IMR-90 (cell line): ENCODE measurements at regions of chr9 and their contacts with region 1.

Region 1: GRCh38 chr9:38277601-38278200 is 114.8 kb upstream of the ALDH1B1 start:
- DNase-seq: no peak
- ATAC-seq: no peak
- H3K4me3 ChIP-seq: no peak overlapping the region
- H3K27ac ChIP-seq: no peak overlapping the region
- H3K4me1 ChIP-seq: no peaks in the 10 kb centered on the region
- H3K27me3 ChIP-seq: peaks cover 46% of the 10 kb centered on the region
- CTCF ChIP-seq: no peak
- POLR2A ChIP-seq: no peak
- RAD21 ChIP-seq: no peak

Region 2: DNA sequence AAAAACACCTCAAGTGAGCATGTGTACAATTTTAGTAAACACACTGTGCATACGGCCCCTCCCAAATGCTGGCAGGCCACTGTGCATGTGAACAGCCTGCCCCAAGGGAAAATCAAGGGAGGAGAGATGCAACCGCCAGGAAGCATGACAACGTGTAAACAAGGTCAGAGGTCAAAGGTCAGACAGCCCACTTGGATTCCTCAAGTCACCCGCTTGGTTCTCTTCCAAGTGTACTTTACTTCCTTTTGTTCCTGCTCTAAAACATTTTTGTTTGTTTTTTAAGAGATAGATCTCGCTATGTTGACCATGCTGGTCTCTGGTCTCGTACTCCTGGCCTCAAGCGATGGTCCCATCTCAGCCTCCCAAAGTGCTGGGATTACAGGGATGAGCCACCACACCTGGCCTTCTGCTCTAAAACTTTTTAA is 82.0 kb before region 1 on chr9:
- CTCF ChIA-PET with region 1: no interaction called
- POLR2A ChIA-PET with region 1: no interaction called
- dilution Hi-C with region 1: no loop called
- in situ Hi-C with region 1: no loop called
- intact Hi-C with region 1: no loop called
- DNase-seq: no peak
- ATAC-seq: no peak
- H3K4me3 ChIP-seq: no peak overlapping the region
- H3K27ac ChIP-seq: no peak overlapping the region
- H3K4me1 ChIP-seq: no peaks in the 10 kb centered on the region
- H3K27me3 ChIP-seq: peaks cover 38% of the 10 kb centered on the region
- CTCF ChIP-seq: no peak
- POLR2A ChIP-seq: no peak
- RAD21 ChIP-seq: no peak

Region 3: DNA sequence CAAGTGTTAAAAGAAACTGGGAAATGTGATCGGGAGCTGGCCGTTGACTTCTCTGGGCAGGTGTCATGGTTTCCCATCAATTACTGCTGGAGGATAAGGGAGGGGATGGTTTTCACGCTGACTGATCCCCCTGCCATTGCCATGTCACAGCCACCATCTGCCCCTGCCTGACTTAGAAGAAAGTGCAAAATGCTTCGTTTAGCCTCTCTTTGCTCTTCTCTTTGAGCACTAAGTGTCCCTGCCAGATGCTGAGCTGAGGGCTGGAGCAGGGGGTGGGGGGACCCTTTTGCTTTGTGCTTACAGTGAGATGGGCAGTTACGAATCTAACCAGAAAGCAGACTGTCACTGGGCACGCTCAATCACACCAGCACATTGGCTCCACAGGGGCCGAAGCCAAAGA is 23.6 kb before region 1 on chr9:
- CTCF ChIA-PET with region 1: no interaction called
- POLR2A ChIA-PET with region 1: no interaction called
- dilution Hi-C with region 1: no loop called
- in situ Hi-C with region 1: no loop called
- intact Hi-C with region 1: loop called (anchors 2 kb)
- DNase-seq: no peak
- ATAC-seq: no peak
- H3K4me3 ChIP-seq: no peak overlapping the region
- H3K27ac ChIP-seq: no peak overlapping the region
- H3K4me1 ChIP-seq: no peaks in the 10 kb centered on the region
- H3K27me3 ChIP-seq: peaks cover 36% of the 10 kb centered on the region
- CTCF ChIP-seq: no peak
- POLR2A ChIP-seq: no peak
- RAD21 ChIP-seq: no peak

Region 4: DNA sequence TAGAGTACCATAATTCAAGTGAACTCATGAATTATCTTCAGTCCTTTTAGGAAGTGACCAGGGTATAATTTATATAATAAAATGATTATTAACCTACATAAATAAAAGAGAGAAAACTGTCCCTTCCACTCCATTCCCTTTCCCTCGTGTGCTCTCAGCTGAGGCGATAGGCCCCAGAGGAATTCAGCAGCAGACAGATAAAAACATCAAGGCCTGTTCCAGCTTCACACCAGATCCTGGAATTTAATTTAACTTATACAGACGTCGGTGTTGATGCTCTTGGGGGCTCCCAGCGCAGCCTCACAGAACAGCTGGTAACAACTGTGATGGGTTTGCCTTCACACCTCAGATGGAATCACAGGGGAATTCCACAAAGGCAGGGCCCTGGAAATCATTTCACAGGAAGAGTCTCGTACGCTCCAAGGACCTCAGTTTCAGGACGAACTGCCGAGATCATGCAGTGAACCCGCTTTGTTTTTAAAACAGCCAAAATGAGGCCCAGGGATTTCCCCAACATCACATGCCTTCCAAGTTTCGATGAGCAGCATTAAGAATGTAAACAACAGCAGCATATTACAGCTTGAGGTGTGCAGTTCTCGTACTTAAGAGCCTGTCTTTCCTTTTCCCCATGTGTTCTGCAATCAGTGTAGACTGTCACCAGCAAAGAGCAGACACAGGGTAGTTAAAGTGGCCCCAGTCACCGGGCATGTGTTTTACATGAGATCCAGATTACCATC is 41.2 kb after region 1 on chr9:
- CTCF ChIA-PET with region 1: no interaction called
- POLR2A ChIA-PET with region 1: no interaction called
- dilution Hi-C with region 1: no loop called
- in situ Hi-C with region 1: no loop called
- intact Hi-C with region 1: no loop called
- DNase-seq: peak; percentile 72
- ATAC-seq: peak; percentile 75
- H3K4me3 ChIP-seq: peak overlapping the region; percentile 26; the same call in 1 of the 2 replicates
- H3K27ac ChIP-seq: no peak overlapping the region
- H3K4me1 ChIP-seq: no peaks in the 10 kb centered on the region
- H3K27me3 ChIP-seq: peaks cover 26% of the 10 kb centered on the region
- CTCF ChIP-seq: no peak
- POLR2A ChIP-seq: no peak
- RAD21 ChIP-seq: no peak

Region 5: DNA sequence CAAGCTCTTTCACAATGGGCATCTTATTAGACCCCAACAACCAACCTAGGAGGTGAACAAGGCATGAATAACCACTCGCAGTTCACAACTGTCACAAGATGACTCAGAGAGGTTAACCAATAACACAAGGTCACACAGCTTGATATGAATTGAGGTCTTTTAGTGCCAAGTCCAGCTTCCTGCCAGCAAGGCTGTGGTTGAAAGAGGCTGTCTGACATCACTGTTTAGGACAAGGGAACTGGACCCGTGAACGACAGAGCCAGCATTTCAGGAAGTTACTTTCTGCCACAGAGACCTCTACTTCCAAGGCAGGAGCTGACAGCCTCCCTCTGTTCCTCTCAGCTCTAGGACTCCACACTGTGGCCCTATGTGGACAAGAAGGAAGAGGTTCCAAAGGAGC is 61.4 kb after region 1 on chr9:
- CTCF ChIA-PET with region 1: no interaction called
- POLR2A ChIA-PET with region 1: no interaction called
- dilution Hi-C with region 1: no loop called
- in situ Hi-C with region 1: no loop called
- intact Hi-C with region 1: loop called (anchors 10 kb)
- DNase-seq: peak; percentile 61
- ATAC-seq: peak; percentile 44
- H3K4me3 ChIP-seq: no peak overlapping the region
- H3K27ac ChIP-seq: no peak overlapping the region
- H3K4me1 ChIP-seq: peaks cover 5% of the 10 kb centered on the region; the same call in 1 of the 2 replicates
- H3K27me3 ChIP-seq: peaks cover 44% of the 10 kb centered on the region
- CTCF ChIP-seq: no peak
- POLR2A ChIP-seq: no peak
- RAD21 ChIP-seq: no peak